Right lobe of liver (tissue), 6 donors: ENCODE measurements at regions of chr16 and their contacts with region 1.

Region 1: GRCh38 chr16:54286090-54286993 is at the start of gene IRX3:
- DNase-seq: peak; percentile 70 to 76 (median 75)
- ATAC-seq: peak; percentile 63 to 70 (median 68)
- H3K4me3 ChIP-seq: peak within 1 kb of the TSS; percentile 37 to 53 (median 45)
- H3K27ac ChIP-seq: peak within 1 kb of the TSS in 2 of 3 donors; percentile 13 to 37
- H3K4me1 ChIP-seq: peaks cover 0 to 53% (median 7%) of the 10 kb centered on the region in 4 donors
- H3K27me3 ChIP-seq: peaks cover 5 to 34% of the 10 kb centered on the region in 2 donors
- CTCF ChIP-seq: no peak
- POLR2A ChIP-seq: no peak
- total RNA-seq, gene IRX3: 0.25 to 1.3 (median 0.61) TPM

Region 2: DNA sequence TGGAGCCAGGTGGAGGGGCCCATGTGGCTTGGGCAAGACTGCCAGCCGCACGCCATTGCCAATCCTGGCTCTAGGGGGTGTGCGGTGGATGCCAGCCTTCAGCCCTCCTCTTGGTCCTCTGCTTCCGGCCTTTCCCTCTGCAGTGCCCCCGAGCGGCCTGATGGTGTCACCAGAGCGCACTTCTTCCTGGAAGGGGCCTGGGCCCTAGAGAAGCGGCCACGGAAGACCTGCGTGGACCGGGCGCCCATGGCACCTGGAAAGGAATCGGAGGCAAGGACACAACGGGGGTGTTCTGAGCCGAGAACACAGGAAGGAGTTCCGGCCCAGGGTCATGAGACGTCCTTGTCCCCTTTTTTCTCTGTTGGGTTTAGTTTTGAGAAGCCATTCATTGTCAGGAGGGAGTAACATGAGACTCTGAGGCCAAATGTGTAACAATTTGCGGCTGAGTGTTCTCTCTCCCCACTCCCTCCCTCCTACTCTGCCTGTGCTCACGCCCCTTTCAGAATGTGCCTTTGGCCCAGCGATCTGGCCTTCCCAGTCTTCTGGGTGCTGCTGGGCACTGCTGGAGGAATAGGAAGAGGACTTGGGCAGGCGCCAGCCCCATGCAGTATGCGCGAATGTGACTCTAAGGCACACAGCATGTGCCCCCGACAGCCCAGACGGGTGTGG is 92.5 kb before region 1 on chr16:
- intact Hi-C with region 1: no loop called
- DNase-seq: peak; percentile 65 to 80 (median 71)
- ATAC-seq: peak; percentile 94 to 99 (median 98)
- H3K4me3 ChIP-seq: peak overlapping the region in 1 of 3 donors; percentile 3
- H3K27ac ChIP-seq: no peak overlapping the region
- H3K4me1 ChIP-seq: no peaks in the 10 kb centered on the region
- H3K27me3 ChIP-seq: no peaks in the 10 kb centered on the region
- CTCF ChIP-seq: peak; percentile 82 to 87 (median 85)
- POLR2A ChIP-seq: no peak

Region 3: DNA sequence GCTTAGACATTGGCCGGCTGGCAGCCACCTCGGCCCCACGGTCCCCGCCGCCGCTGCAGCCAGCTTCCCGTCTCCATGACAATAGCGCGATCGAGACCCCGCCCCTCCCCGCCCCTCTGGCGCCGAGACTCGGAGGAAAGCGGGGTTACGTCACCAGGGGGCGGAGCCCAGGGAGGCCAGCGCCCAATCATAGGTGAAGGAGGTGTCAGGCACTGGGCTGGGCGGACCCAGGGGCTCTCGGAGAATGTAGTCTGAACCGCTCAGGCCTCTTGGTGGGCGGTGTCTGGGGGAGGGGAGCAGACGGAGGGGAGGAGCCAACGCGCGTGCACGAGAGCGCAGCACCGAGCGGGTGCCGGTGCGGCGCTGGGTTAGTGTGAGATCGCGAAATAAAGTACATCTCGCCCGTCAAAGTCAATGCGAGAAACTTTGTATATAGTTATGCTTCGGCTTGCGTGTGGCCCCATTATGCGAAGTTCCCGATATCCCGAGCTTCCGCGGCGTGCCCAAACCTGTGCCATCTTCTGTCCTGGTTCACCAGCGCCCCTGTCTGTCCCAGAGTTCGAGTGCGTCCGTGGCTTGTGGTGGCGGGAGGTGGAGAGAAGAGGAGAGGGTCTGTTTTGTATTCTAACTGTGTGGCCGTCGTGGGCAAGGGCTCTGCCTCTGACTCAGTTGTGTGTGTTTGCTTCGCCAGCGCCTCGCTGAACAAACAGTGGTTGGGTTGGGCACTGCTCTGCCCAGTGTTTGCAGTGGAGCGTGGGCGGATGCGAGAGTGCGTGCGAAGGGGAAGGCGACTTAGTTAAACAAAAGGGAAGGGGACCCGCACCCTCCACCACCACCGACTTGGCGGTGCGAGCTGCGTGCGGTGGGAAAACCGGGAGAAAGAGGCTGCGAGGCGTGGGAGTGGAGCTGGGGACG is 643.0 kb after region 1 on chr16:
- intact Hi-C with region 1: loop called in 1 of 2 experiments (anchors 10 kb)
- DNase-seq: peak; percentile 99
- ATAC-seq: peak; percentile 92 to 98 (median 96)
- H3K4me3 ChIP-seq: peak overlapping the region; percentile 54 to 67 (median 59)
- H3K27ac ChIP-seq: no peak overlapping the region
- H3K4me1 ChIP-seq: peaks cover 0 to 11% (median 3%) of the 10 kb centered on the region in 4 donors
- H3K27me3 ChIP-seq: peaks cover 28 to 49% of the 10 kb centered on the region in 2 donors
- CTCF ChIP-seq: peak in 1 of 4 donors; percentile 9
- POLR2A ChIP-seq: peak; percentile 29

Region 4: GRCh38 chr16:54939510-54940279 is 653.4 kb after region 1 on chr16:
- intact Hi-C with region 1: loop called (anchors 10 kb)
- DNase-seq: no peak
- ATAC-seq: no peak
- H3K4me3 ChIP-seq: no peak overlapping the region
- H3K27ac ChIP-seq: no peak overlapping the region
- H3K4me1 ChIP-seq: peaks cover 0 to 26% (median 3%) of the 10 kb centered on the region in 4 donors
- H3K27me3 ChIP-seq: peaks cover 26 to 56% of the 10 kb centered on the region in 2 donors
- CTCF ChIP-seq: no peak
- POLR2A ChIP-seq: no peak